Activated naive CD4-positive, alpha-beta T cell treated with anti-CD3 and anti-CD28 coated beads for 36 hours (primary cell): ENCODE measurements at regions of chr20 and their contacts with region 1.

Region 1: DNA sequence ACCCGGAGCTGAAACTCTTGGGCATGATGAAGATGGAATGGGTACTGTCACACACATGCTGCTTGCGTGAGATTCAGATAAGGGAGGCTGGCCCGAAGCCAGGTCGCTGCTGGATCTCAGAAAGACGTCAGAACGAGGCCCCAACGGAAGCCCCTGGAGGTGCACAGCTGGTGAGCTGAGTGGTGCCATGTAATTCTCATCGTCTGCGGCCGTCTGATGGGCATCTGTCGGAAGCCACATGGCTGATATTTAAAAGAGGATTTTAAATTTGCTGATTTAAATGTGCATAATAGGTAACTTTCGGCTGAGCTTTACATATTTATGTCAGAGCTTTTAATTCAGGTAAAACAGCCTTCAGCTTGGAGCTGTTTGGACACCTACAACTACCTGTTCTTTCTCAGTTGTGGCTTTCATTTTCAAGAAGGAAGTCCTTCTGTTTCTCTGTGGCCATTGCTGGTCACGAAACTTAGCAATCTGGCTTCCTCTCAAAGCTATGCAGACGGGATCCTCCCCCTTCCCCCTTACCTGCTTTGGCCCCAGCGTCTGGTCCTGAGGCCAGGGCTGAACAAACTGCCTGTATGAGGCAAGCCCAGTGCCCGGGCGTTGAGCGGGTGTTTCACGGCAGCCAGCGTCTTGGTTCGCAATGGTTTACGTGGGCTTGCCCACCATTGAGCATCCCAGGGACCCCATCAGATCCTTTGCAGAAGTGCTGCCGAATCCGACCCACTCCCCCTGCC is 9.2 kb downstream of the SLCO4A1 start:
- DNase-seq: peak; percentile 87
- H3K4me3 Mint-ChIP-seq: peak overlapping the region; percentile 51
- H3K27ac Mint-ChIP-seq: peak overlapping the region; percentile 77
- H3K4me1 Mint-ChIP-seq: peaks cover 31% of the 10 kb centered on the region
- H3K27me3 Mint-ChIP-seq: no peaks in the 10 kb centered on the region

Region 2: DNA sequence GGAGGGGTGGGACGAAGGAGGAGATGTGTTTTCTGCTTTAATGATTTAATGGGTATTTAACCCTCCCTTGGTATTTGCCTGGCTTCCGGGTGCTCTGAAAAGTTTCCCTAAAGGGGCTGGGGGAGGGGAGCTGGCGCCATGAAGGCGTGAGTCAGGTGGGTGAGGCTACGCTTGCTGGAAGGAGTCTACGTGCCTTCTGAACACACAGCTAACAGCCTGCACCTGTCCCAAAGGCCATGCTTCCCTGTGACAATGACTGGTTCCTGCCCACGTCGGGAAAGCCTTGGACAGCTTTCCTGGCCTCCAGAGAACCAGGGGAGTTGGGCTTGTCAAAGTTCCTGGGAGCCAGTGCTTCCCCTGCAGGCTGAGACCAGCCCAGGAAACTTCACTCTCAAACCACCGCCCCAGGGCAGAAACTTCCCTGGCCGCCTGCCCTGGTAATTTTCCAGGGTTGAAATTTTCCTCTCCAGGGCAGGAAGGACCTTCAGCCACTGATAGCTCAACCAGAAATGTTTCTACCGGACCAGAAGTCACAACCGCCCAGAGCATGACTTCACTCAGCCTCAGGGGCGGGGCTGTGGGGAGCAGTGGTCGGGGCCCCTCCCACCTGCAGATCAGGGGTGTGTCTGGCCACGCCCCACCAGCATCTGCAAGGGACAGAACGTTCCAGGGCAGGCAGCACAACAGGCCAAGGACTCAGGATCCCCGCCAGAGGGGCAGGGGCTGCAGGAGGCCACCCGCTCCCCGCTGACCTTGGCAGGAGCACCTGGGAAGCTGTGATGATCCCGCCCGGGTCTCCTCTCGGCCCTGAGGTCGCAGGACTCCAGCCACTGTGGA is 27.7 kb before region 1 on chr20:
- CTCF ChIA-PET with region 1: no interaction called
- intact Hi-C with region 1: loop called (anchors 1 kb)
- DNase-seq: peak; percentile 95
- H3K4me3 Mint-ChIP-seq: peak overlapping the region; percentile 74
- H3K27ac Mint-ChIP-seq: peak overlapping the region; percentile 94
- H3K4me1 Mint-ChIP-seq: peaks cover 23% of the 10 kb centered on the region
- H3K27me3 Mint-ChIP-seq: no peaks in the 10 kb centered on the region